ENCODE measurements at regions of chr21 and their contacts with region 1.

Region 1: GRCh38 chr21:42258153-42258884 is 39.4 kb downstream of the ABCG1 start:
- H3K4me3 ChIP-seq: no peak overlapping the region
- H3K27ac ChIP-seq: no peak overlapping the region
- H3K4me1 ChIP-seq: no peaks in the 10 kb centered on the region
- CTCF ChIP-seq: no peak; the same call in none of the 2 replicates

Region 2: DNA sequence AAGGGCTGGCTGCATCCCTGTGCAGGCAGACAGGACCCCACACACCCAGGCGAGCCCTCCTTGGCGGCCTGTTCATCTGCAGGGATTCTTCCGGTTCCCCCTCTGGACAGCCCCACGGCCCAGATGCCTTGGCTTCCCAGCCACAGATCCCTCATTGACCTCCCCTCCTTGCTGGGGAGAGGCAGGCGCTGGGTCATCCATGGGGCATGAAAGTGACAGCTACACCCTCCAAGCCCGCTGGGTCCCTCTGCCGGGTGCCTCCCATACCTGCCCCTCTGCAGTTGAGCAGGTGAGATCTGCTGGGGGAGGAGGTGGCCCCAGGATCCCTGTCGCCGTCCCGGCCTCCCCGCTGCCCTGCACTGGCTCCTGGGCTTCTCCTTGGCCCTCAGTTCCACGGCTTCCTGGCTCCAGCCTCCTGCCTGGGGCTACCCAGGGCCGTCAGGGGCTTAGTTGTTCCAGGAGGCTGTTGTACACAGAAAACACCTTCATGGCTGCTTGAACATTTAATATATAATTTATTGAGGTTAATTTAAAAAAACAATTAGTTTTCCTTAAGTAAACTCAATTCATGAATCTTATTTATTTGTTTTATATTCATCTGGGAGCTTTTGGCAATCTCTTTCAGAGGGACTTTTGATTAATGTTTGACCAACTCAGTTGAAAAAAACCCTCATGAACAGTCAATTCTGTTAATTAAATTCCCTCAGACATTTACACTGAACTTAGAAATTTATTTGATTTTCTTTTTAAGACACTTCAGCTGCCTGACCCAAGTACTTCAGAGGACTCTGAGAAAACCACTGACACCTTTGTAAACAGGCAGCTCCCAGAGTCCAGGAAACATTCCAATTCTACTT is 107.0 kb before region 1 on chr21:
- CTCF ChIA-PET with region 1: interaction called, 46 read pairs
- POLR2A ChIA-PET with region 1: interaction called, 3 read pairs
- H3K4me3 ChIP-seq: no peak overlapping the region
- H3K27ac ChIP-seq: no peak overlapping the region
- H3K4me1 ChIP-seq: no peaks in the 10 kb centered on the region
- CTCF ChIP-seq: no peak

Region 3: GRCh38 chr21:42171091-42172053 is 86.9 kb before region 1 on chr21:
- CTCF ChIA-PET with region 1: interaction called, 12 read pairs
- POLR2A ChIA-PET with region 1: no interaction called
- H3K4me3 ChIP-seq: no peak overlapping the region
- H3K27ac ChIP-seq: no peak overlapping the region
- H3K4me1 ChIP-seq: peaks cover 7% of the 10 kb centered on the region
- CTCF ChIP-seq: no peak

Region 4: DNA sequence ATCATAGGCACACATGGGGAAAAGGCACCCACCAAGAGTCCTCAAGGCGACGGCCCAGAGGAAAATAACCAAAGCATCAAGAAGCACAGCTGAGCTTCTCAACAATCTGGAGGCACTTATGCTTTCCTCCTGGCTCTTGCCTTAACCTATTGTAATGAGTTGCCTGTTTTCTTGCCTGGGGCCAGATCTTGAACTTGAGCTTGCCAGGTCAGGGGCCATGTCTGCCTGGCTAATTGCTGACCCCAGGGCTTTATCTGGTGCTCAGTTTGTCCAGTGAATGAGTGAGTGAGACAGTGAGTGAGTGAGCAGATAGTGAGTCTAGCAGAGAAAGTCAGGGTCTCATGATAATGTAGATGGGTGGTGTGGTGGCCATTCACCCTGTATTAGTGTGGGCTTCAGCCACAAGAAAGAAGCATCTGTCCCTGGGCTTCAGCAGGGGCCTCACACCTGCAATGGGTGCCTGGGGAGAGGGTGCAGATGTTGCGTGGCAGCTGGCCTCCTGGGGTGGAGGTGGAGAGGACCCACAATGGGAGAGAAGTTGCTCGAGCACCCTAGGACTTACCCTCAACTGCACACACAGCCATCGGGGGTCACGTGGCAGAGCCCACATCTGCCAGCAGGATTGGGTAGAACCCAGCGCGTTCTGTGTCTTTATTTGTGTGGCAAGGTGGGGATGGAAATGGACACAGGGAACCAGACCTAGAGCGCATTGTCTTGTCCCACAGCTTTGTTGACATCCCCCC is 34.7 kb before region 1 on chr21:
- CTCF ChIA-PET with region 1: interaction called, 15 read pairs
- POLR2A ChIA-PET with region 1: no interaction called
- H3K4me3 ChIP-seq: no peak overlapping the region
- H3K27ac ChIP-seq: no peak overlapping the region
- H3K4me1 ChIP-seq: peaks cover 4% of the 10 kb centered on the region; the same call in 1 of the 2 replicates
- CTCF ChIP-seq: no peak

Region 5: GRCh38 chr21:42238185-42238934 is 20.0 kb before region 1 on chr21:
- CTCF ChIA-PET with region 1: interaction called, 32 read pairs
- POLR2A ChIA-PET with region 1: no interaction called
- H3K4me3 ChIP-seq: no peak overlapping the region
- H3K27ac ChIP-seq: no peak overlapping the region
- H3K4me1 ChIP-seq: peaks cover 16% of the 10 kb centered on the region
- CTCF ChIP-seq: no peak

Region 6: GRCh38 chr21:42272518-42272917 is 14.2 kb after region 1 on chr21:
- CTCF ChIA-PET with region 1: interaction called, 23 read pairs
- POLR2A ChIA-PET with region 1: no interaction called
- H3K4me3 ChIP-seq: no peak overlapping the region
- H3K27ac ChIP-seq: no peak overlapping the region
- H3K4me1 ChIP-seq: no peaks in the 10 kb centered on the region
- CTCF ChIP-seq: no peak

Measured in HEK293 (cell line).